ENCODE measurements at regions of chr7 and their contacts with region 1.

Region 1: DNA sequence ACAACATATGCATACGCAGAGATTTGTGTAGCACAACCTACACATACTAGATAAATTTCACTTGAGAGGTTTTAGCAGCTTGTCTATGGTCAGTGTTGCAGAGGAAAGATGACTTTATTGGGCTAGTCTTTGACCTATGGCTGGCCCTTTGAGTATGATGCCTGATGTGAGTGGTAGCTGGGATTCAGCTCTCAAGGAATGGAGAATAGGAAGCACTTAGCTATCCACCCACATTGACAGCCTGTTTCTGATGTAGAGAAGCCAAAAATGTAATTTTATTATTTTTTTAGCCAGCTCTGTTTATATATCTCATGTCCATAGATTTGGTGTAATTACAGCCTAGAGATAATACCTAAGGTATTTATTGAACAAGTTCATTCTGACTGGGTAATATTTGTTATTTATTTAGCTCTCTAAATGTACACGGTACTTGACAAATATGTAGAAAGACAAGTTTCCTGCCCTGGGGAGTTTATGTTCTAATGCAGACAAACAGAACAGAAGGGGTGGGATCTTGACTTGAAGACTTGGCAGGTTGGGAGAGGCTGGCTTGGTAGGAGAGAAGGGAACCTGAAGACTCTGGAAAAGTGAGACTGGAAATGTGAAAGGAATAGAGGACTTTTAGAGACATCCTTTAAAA is 97.6 kb upstream of the CDK6 start:
- DNase-seq: peak; percentile 55 to 75
- H3K4me3 ChIP-seq: no peak overlapping the region
- H3K4me3 Mint-ChIP-seq: peak overlapping the region; percentile 30
- H3K27ac Mint-ChIP-seq: peak overlapping the region; percentile 80
- H3K4me1 ChIP-seq: peaks cover 23% of the 10 kb centered on the region
- H3K4me1 Mint-ChIP-seq: peaks cover 19% of the 10 kb centered on the region
- H3K27me3 ChIP-seq: no peaks in the 10 kb centered on the region
- H3K27me3 Mint-ChIP-seq: no peaks in the 10 kb centered on the region
- CTCF ChIP-seq: no peak

Region 2: DNA sequence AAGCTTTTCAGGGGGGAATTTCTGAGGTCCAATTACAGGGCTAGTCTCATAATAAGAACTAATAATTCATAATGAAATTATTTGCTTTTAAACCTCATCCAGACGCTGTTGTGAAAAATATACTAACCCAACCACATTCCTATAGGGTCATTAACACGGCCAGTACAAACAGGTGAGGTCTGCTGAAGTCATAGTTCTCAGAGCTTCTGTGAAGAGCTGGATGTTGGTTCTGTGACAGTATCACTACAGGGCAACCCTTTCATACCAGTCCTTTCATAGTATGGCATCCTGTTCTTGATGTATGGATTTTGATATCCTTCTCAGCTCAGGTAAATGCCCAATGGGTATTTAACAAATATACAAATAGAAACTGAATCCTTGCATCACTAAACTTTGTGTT is 281.4 kb before region 1 on chr7:
- CTCF ChIA-PET with region 1: no interaction called
- POLR2A ChIA-PET with region 1: no interaction called
- intact Hi-C with region 1: no loop called
- DNase-seq: peak; percentile 52 to 55
- H3K4me3 ChIP-seq: no peak overlapping the region
- H3K4me3 Mint-ChIP-seq: no peak overlapping the region
- H3K27ac Mint-ChIP-seq: peak overlapping the region; percentile 56
- H3K4me1 ChIP-seq: peaks cover 33% of the 10 kb centered on the region
- H3K4me1 Mint-ChIP-seq: peaks cover 59% of the 10 kb centered on the region
- H3K27me3 ChIP-seq: no peaks in the 10 kb centered on the region
- H3K27me3 Mint-ChIP-seq: no peaks in the 10 kb centered on the region
- CTCF ChIP-seq: no peak

Region 3: DNA sequence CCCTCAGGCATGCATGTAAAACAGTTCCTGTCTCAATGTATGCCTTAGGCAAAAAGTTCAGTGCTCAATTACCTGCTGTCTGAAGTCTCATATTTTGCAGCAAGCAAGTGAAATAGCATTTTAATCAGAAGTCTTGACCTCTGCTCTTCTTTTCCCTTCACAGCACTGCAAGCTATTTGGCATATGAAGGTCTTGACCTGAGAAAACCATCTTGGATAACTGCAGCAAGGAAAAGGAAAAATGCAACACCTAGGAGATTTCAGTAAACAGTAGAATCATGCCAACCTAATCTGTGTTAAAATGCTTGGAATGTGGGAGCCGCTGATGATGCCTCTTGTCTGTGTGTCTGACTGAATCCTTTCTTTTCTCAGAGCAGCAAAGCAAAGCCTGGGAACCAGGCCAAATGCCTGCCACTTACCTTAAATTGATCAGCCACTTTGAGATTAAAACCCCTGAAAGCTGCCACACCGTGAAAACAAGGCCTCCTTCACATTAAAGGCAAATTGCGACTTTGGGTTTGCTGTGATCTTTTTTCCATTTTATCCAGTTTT is 17.2 kb before region 1 on chr7:
- CTCF ChIA-PET with region 1: interaction called, 7 read pairs
- POLR2A ChIA-PET with region 1: no interaction called
- intact Hi-C with region 1: loop called (anchors 2 kb)
- DNase-seq: peak; percentile 55 to 57
- H3K4me3 ChIP-seq: no peak overlapping the region
- H3K4me3 Mint-ChIP-seq: peak overlapping the region; percentile 12
- H3K27ac Mint-ChIP-seq: peak overlapping the region; percentile 82
- H3K4me1 ChIP-seq: peaks cover 13% of the 10 kb centered on the region
- H3K4me1 Mint-ChIP-seq: peaks cover 11% of the 10 kb centered on the region
- H3K27me3 ChIP-seq: no peaks in the 10 kb centered on the region
- H3K27me3 Mint-ChIP-seq: no peaks in the 10 kb centered on the region
- CTCF ChIP-seq: no peak

Region 4: GRCh38 chr7:92944633-92945032 is 10.7 kb after region 1 on chr7:
- CTCF ChIA-PET with region 1: no interaction called
- POLR2A ChIA-PET with region 1: no interaction called
- intact Hi-C with region 1: loop called (anchors 1 kb)
- DNase-seq: no peak
- H3K4me3 ChIP-seq: no peak overlapping the region
- H3K4me3 Mint-ChIP-seq: no peak overlapping the region
- H3K27ac Mint-ChIP-seq: no peak overlapping the region
- H3K4me1 ChIP-seq: no peaks in the 10 kb centered on the region; the same call in 1 of the 2 replicates
- H3K4me1 Mint-ChIP-seq: peaks cover 8% of the 10 kb centered on the region
- H3K27me3 ChIP-seq: no peaks in the 10 kb centered on the region
- H3K27me3 Mint-ChIP-seq: no peaks in the 10 kb centered on the region
- CTCF ChIP-seq: no peak

Region 5: DNA sequence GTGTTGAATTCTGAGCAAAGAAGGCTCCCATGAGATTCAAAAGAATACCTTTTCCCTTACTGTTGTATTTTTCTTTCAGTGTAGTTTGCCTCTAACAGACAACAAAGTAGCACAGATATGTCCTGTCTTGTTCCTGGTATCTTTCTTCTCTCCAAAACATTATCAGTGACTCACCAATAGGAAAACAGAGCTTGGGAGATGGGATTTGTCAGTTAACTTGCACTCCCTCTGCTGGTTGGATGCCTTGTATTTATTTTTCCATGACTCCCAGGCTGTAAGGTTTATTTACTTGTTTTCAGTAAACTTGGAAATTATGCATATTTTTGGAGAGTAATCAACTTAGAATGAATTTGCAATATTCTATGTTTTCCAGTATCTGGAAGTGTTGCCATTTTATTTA is 54.1 kb after region 1 on chr7:
- CTCF ChIA-PET with region 1: no interaction called
- POLR2A ChIA-PET with region 1: no interaction called
- intact Hi-C with region 1: loop called (anchors 2 kb)
- DNase-seq: peak in 1 of 2 experiments; percentile 55
- H3K4me3 ChIP-seq: no peak overlapping the region
- H3K4me3 Mint-ChIP-seq: no peak overlapping the region
- H3K27ac Mint-ChIP-seq: peak overlapping the region; percentile 32
- H3K4me1 ChIP-seq: 0 out of 2 replicates have a peak, but pooled peaks cover 10% of the 10 kb centered on the region
- H3K4me1 Mint-ChIP-seq: peaks cover 11% of the 10 kb centered on the region
- H3K27me3 ChIP-seq: no peaks in the 10 kb centered on the region
- H3K27me3 Mint-ChIP-seq: peaks cover 3% of the 10 kb centered on the region
- CTCF ChIP-seq: peak; percentile 39 to 53

Measured in Caco-2 (cell line).